Activated naive CD8-positive, alpha-beta T cell treated with anti-CD3 and anti-CD28 coated beads, Interleukin-2, amount 10 ng/mL, durations not matched to agents 7 days and 5 days (primary cell): ENCODE measurements at regions of chr22 and their contacts with region 1.

Region 1: DNA sequence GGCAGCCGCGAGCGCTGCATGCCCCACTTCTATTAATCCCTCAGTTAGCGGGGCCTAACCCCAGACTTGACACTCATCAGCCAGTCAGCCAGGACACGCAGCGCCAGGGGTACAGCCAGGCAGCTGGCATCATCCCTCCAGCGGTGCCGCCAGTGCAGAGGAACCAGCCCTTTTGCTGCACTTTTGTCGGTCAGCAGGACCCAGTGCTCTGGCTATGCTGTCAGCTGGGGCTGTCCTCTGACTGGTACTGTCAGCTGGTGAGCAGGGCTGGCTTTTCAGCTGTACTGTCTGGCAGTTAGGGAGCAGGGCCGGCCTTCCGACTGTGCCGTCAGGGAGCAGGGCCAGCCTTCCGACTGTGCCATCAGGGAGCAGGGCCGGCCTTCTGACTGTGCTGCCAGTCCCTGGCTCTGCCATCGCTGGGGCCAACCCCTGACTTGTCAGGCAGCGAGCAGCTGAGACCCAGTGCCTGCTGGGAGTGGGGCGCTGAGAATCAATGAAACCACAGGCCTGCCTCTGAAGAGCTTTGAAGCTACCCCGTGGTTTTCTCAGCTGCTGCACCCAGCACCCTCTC is 115.4 kb downstream of the KIAA1671 start:
- DNase-seq: peak; percentile 82
- ATAC-seq: peak; percentile 85
- H3K4me3 Mint-ChIP-seq: peak overlapping the region; percentile 86
- H3K27ac Mint-ChIP-seq: peak overlapping the region; percentile 97
- H3K4me1 Mint-ChIP-seq: peaks cover 67% of the 10 kb centered on the region
- H3K27me3 Mint-ChIP-seq: no peaks in the 10 kb centered on the region

Region 2: DNA sequence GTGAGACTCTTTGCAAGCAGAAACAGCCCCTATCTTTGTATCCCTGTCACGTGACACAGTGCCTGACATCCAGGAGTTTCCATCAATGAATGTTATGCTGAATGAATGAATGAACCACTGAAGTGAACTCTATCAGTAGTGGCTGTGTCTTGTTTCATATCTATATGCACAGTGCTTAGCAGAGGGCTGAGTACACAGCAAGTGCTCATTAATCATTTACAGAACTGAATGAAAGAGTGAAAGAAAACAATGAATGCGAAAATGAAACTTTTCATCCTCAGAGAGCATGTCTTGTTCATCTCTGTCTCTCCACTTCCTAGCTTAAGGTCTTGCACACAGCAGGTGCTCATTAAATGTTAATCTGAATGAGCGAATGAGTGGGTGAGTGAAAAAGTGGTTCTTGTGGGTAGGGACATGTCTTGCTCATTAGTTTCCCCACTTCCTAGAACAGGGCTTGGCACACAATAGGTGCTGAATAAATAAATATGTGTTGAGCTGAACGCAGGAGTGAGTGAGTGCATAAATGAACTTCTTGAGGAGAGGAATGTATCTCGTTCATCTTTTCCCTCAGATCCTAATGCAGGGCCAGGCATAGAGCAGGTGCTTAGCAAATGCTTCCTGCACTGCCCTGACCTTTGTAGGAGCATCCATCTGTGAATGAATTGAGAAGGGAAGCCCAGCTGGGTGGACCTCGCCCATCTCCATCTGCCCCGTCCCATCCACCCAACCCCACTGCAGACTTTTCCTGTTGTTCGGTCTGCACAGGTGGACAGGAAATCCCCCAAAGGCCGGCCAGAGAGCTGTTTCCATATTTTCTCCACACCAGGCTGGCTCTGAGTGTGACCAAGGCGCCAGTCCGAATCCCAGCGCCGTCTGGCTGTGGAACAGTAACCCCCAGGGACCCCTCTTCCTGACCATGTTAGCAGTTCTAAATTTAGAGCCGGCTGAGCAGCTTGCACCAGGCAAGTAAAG is 18.3 kb after region 1 on chr22:
- POLR2A ChIA-PET with region 1: interaction called, 15 read pairs
- DNase-seq: no peak
- ATAC-seq: peak; percentile 66
- H3K4me3 Mint-ChIP-seq: peak overlapping the region; percentile 66
- H3K27ac Mint-ChIP-seq: peak overlapping the region; percentile 78
- H3K4me1 Mint-ChIP-seq: peaks cover 32% of the 10 kb centered on the region
- H3K27me3 Mint-ChIP-seq: no peaks in the 10 kb centered on the region